AG04450 (cell line): ENCODE measurements at regions of chr15 and their contacts with region 1.

Region 1: DNA sequence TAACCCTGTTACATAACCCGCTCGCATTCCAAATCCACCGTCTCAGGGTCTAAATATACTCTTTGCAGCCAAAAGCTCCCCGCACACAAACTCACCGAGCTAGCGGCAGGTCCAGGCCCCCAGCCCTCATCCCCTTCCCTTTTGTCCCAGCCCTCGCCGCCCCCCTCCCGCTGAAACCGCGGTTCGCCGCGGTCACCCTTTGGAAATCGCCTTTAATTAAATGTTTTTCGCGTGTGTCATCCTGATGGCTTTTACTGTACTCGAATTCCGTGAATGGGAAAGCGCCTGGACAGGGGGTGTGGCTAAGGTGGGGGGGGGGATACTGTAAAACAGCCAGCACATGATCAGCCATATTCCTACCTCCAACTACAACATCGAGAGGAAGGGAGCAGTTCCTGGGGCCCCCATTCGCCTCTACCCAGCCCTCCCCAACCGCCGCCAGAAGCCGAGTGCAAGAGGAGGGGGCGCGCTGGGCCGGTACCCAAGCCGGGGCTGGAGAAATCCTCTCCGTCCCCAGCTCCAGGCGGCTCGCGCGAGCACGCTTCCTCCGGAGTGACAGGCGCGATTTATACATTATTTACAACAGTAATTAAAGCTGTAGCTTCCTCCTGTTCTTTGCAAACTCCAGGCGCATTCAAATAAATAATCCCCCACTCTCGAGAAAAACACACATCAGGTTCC is 1.7 kb downstream of the RORA start:
- DNase-seq: no peak
- H3K4me3 ChIP-seq: peak overlapping the region; percentile 69
- H3K27ac ChIP-seq: no peak overlapping the region
- H3K27me3 ChIP-seq: peaks cover 24% of the 10 kb centered on the region
- CTCF ChIP-seq: no peak

Region 2: DNA sequence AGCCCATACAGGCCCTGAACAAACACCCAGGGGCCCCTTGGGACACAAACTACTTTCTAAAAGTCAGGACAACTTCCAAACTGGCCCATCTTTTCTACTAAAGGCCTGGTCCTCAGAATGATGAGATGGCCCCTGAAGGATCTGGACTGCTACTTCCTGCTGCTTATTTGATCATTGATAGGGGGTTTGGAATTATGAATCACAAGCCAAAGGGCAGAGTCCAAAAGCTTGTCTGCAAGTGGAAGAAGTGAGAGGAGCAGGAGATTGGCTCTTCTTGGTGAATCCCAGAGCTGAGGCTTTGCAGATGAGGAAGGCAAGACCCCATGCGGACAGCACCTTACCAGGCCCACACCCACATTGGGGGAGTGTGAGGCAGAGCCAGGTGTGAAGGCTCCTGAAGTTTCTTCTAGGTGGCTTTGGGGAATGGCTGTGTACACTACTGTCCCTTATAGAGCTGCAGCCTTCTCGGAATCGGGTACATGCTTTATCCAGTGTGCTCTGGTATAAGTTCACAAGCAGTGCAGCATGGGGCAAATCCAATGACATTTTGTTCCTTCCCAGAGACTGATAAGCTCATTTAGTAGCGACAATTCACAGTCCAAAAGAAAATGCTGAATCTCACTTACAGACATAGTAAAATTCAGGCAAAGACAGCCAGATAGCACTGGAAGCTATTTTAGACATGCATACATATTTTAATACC is 131.5 kb before region 1 on chr15:
- CTCF ChIA-PET with region 1: interaction called, 13 read pairs
- POLR2A ChIA-PET with region 1: no interaction called
- DNase-seq: no peak
- H3K4me3 ChIP-seq: no peak overlapping the region
- H3K27ac ChIP-seq: no peak overlapping the region
- H3K27me3 ChIP-seq: peaks cover 4% of the 10 kb centered on the region
- CTCF ChIP-seq: no peak

Region 3: GRCh38 chr15:61275901-61276300 is 48.5 kb after region 1 on chr15:
- CTCF ChIA-PET with region 1: no interaction called
- POLR2A ChIA-PET with region 1: interaction called, 10 read pairs
- DNase-seq: no peak
- H3K4me3 ChIP-seq: no peak overlapping the region
- H3K27ac ChIP-seq: no peak overlapping the region
- H3K27me3 ChIP-seq: peaks cover 2% of the 10 kb centered on the region
- CTCF ChIP-seq: no peak

Region 4: DNA sequence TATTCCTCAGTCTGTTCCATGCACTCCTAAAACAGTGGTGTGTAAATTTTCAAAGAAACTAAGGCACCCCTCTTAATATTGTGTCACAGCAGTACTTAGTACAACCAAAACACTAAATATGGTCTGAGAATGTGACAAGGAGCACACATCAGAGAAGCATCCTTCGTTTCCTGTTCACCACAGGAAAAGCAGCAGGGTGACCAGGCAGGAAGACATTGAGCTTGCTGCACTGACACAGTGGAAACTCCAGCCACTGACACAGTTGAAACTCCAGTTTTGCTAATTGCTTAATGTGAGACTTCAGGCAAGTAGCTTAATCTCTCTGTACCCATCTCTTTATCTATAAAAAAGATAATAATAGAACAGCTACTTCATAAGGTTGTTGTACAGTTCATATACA is 354.7 kb after region 1 on chr15:
- CTCF ChIA-PET with region 1: no interaction called
- POLR2A ChIA-PET with region 1: interaction called, 11 read pairs
- DNase-seq: no peak
- H3K4me3 ChIP-seq: no peak overlapping the region
- H3K27ac ChIP-seq: no peak overlapping the region
- H3K27me3 ChIP-seq: no peaks in the 10 kb centered on the region
- CTCF ChIP-seq: no peak